PC-9 (cell line): ENCODE measurements at regions of chr7 and their contacts with region 1.

Region 1: DNA sequence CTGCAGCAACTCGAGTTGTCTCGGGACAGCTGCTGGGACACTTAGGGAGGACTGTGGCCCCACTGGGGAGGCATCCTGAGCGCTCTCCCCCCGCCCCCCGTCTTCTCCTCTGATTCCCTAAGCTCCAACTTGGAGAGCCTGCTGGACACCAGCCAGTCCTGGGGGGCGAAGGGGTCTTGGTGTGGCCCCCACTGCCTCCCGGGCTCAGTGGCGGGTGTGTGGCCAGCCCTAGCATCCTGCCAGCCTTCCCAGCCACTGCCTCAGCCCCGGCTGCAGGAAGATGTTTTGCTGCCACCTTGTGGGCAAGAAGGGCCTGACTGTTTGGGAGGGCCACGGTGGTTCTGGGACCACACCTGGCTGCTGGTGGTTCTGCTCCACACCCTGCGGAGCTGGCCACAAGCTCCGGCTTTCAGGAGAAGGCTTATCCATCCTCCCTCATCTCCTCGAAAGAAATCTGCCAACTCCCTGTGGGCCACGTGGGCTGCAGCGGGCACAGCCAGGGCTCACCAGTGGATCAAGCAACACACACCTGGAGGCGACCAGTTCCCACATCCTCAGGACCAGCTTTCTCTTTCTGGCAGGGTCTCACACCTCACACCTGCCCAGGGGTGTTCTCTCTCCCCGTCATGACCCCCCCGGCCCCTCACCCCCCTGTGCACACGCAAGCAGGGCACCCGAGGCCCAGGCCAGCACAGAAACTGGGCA is 24.8 kb downstream of the AGAP3 start:
- DNase-seq: peak; percentile 52 to 82
- H3K4me3 ChIP-seq: no peak overlapping the region
- H3K27ac ChIP-seq: no peak overlapping the region
- H3K4me1 ChIP-seq: peaks cover 26% of the 10 kb centered on the region
- H3K27me3 ChIP-seq: no peaks in the 10 kb centered on the region
- CTCF ChIP-seq: peak; percentile 92

Region 2: DNA sequence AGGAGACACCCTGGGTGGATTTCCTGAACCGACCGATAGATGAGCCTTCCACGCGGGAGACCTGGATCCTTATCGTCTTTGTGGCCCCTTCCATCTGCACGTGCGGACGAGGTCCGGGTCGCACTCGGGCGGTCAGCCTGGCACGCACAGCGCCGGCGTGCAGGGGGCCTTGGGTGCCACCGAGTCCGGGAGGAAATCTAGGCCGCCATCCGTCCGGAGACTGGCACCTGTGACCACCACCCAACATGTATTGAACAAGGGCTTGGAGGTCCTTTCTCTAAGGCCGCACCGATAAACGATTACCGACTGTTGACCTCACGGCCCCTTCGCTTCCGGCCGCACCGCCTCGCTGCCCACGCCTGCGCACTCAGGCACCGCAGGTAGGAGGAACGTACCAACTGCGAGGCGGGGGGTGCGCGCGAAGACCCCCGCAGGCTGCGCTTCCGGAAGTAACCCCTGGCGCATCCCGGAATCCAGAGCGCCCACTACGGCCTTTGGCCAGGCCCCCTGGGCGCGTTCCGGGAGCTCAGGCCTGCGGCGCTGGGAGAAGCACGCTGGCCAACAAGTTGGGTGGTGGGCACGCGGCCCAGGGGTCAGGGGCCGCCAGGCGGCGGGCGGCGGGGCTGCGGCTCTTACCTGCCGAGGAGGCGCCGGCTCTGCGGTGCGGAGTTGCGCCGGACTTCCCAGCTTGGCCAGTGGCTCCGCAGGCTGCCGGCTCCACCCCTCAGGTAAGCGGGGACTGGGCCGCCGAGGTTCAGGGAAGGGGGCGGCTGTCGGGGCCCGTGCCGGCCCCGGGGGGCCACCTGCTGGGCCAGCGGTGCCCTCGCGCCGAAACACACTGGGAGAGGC is 788.0 kb before region 1 on chr7 and contains the starts of genes ACTR3C and LRRC61:
- CTCF ChIA-PET with region 1: no interaction called
- POLR2A ChIA-PET with region 1: no interaction called
- intact Hi-C with region 1: loop called (anchors 5 kb)
- DNase-seq: peak; percentile 69 to 73
- H3K4me3 ChIP-seq: peak within 1 kb of the TSS; percentile 98
- H3K27ac ChIP-seq: peak within 1 kb of the TSS; percentile 83
- H3K4me1 ChIP-seq: peaks cover 54% of the 10 kb centered on the region
- H3K27me3 ChIP-seq: no peaks in the 10 kb centered on the region
- CTCF ChIP-seq: peak; percentile 42; the same call in 1 of the 2 replicates
- total RNA-seq, gene ACTR3C: 24.1 and 34.5 TPM in 2 replicates
- total RNA-seq, gene LRRC61: 34.8 and 42.3 TPM in 2 replicates

Region 3: GRCh38 chr7:150876817-150877526 is 234.1 kb before region 1 on chr7:
- CTCF ChIA-PET with region 1: interaction called, 6 read pairs
- POLR2A ChIA-PET with region 1: no interaction called
- intact Hi-C with region 1: loop called (anchors 5 kb)
- DNase-seq: peak; percentile 67 to 68
- H3K4me3 ChIP-seq: no peak overlapping the region
- H3K27ac ChIP-seq: no peak overlapping the region
- H3K4me1 ChIP-seq: no peaks in the 10 kb centered on the region
- H3K27me3 ChIP-seq: peaks cover 41% of the 10 kb centered on the region
- CTCF ChIP-seq: peak; percentile 49

Region 4: GRCh38 chr7:150962553-150963399 is 148.3 kb before region 1 on chr7:
- CTCF ChIA-PET with region 1: no interaction called
- POLR2A ChIA-PET with region 1: no interaction called
- intact Hi-C with region 1: loop called (anchors 1 kb)
- DNase-seq: peak in 1 of 2 experiments; percentile 61
- H3K4me3 ChIP-seq: no peak overlapping the region
- H3K27ac ChIP-seq: no peak overlapping the region
- H3K4me1 ChIP-seq: no peaks in the 10 kb centered on the region
- H3K27me3 ChIP-seq: peaks cover 45% of the 10 kb centered on the region
- CTCF ChIP-seq: peak; percentile 97

Region 5: DNA sequence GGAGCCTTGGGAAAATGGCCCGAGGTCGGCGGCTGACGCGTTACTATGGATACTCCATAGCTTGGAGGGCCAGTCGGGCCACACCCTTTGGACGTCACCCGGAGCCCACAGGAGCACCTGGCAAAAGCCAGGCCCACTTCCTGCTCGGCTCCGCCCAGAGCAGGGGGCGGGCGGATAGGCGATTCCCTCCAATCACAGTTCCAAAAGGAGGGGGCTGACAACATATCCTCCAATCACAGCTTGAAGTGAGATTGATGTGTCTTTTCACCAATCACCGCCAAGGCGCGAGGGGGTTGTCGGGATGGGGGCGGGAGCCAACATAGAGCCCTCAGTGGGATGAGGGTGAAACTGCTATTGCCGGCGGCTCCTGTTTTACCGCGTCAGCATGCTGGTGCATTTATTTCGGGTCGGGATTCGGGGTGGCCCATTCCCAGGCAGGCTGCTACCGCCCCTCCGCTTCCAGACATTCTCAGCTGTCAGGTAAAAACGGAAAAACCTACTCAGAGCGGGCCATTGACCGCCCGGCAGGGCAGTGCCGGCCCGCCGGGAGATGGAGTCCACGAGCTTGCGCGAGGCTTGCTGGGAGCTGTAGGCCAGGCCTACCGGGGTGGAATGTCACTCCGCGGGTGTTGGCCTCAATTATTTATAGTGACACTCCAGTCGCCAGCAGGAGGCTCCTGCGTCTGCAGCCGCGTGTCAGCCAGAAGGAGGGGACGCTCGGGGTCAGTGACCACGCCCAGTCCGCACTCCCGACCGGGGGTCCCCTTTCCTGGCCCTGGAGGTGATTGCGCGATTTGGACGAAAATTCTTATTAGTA is 82.8 kb before region 1 on chr7 and contains the start of gene ABCB8:
- CTCF ChIA-PET with region 1: interaction called, 3 read pairs
- POLR2A ChIA-PET with region 1: interaction called, 4 read pairs
- intact Hi-C with region 1: loop called (anchors 1 kb)
- DNase-seq: peak; percentile 99 to 100
- H3K4me3 ChIP-seq: peak within 1 kb of the TSS; percentile 59
- H3K27ac ChIP-seq: peak within 1 kb of the TSS; percentile 59
- H3K4me1 ChIP-seq: peaks cover 55% of the 10 kb centered on the region
- H3K27me3 ChIP-seq: no peaks in the 10 kb centered on the region
- CTCF ChIP-seq: peak; percentile 73; the same call in 1 of the 2 replicates
- total RNA-seq, gene ABCB8: 51.8 and 61.9 TPM in 2 replicates

Region 6: DNA sequence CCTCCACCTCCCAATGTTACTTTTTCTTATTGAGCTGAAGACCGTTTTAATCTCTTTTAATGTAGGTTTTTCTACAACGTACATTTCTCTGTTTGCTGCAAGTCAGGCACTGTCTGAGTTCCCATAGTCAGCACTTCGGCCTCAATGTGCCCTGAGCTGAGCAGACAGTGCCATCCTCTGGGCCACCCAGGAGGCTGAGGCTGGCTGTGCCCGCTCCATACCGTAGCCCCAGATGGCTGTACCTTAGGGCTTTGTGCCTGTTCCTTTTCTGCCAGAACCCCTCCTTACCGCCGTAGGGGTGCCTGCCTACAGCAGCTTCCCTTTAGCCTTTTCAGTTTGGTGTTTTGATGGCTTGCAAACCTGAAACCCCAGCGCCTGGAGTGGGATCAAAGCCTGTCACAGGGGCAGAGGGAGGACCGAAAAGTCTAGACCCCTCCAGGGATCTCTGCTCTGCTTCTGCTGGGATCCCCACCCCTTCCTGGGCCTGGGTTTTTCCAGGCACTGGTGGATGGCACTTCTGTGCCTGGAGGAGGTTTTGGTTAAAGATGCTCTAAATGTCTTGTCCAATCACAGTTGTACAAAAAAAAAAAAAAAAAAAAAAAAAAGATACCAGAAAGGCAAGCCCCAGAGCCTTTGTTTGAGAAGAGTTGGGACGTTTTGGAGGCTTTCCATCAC is 15.8 kb before region 1 on chr7:
- CTCF ChIA-PET with region 1: no interaction called
- POLR2A ChIA-PET with region 1: no interaction called
- intact Hi-C with region 1: no loop called
- DNase-seq: no peak
- H3K4me3 ChIP-seq: no peak overlapping the region
- H3K27ac ChIP-seq: no peak overlapping the region
- H3K4me1 ChIP-seq: no peaks in the 10 kb centered on the region
- H3K27me3 ChIP-seq: no peaks in the 10 kb centered on the region
- CTCF ChIP-seq: no peak

Region 7: GRCh38 chr7:151181011-151181431 is 69.9 kb after region 1 on chr7:
- CTCF ChIA-PET with region 1: no interaction called
- POLR2A ChIA-PET with region 1: no interaction called
- intact Hi-C with region 1: no loop called
- DNase-seq: no peak
- H3K4me3 ChIP-seq: no peak overlapping the region
- H3K27ac ChIP-seq: no peak overlapping the region
- H3K4me1 ChIP-seq: no peaks in the 10 kb centered on the region
- H3K27me3 ChIP-seq: peaks cover 96% of the 10 kb centered on the region
- CTCF ChIP-seq: no peak

Region 8: GRCh38 chr7:151226875-151227782 is 116.0 kb after region 1 on chr7 and contains the start of gene ABCF2:
- CTCF ChIA-PET with region 1: interaction called, 3 read pairs
- POLR2A ChIA-PET with region 1: interaction called, 7 read pairs
- intact Hi-C with region 1: loop called (anchors 5 kb)
- DNase-seq: peak; percentile 98 to 99
- H3K4me3 ChIP-seq: peak within 1 kb of the TSS; percentile 70
- H3K27ac ChIP-seq: peak within 1 kb of the TSS; percentile 66
- H3K4me1 ChIP-seq: peaks cover 30% of the 10 kb centered on the region
- H3K27me3 ChIP-seq: no peaks in the 10 kb centered on the region
- CTCF ChIP-seq: no peak
- total RNA-seq, gene ABCF2: 45.8 and 49.4 TPM in 2 replicates

Region 9: DNA sequence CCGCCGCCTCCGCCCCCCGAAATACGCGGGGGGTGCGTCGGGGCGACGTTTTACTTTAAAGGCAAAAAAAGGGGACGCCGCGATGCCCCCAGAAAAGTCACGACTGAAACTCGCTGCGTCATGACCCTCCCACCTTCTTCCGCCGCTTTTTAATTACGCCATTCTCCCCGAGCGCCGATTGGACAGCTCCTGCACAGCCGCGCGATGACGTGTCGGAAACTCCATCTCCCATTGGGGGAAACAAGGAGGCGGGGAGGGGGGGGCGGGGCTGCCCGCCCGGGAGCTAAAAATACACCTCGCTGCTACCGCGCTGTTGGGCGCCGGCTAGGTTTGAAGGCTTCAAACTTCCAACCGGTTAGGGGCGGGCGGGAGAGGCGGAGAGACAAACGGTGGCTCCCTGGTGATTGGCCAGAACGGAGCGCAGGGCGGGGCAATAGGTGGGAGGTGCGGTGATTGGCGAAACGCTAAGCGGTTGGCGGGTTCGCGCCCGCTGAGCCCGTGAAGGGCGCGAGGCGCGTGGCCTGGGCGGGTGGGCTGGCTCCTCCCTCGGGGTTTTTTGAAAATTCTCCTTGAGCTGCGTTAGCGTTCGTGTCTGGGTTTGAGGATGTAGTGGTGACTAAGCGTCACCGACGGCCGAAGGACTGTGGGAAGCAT is 408.8 kb after region 1 on chr7 and contains the start of gene RHEB:
- CTCF ChIA-PET with region 1: no interaction called
- POLR2A ChIA-PET with region 1: no interaction called
- intact Hi-C with region 1: no loop called
- DNase-seq: peak; percentile 98 to 99
- H3K4me3 ChIP-seq: peak within 1 kb of the TSS; percentile 87
- H3K27ac ChIP-seq: peak within 1 kb of the TSS; percentile 94
- H3K4me1 ChIP-seq: peaks cover 37% of the 10 kb centered on the region
- H3K27me3 ChIP-seq: no peaks in the 10 kb centered on the region
- CTCF ChIP-seq: no peak
- total RNA-seq, gene RHEB: 201 and 202 TPM in 2 replicates